Sigmoid colon (tissue), 7 donors: ENCODE measurements at regions of chr14 and their contacts with region 1.

Region 1: DNA sequence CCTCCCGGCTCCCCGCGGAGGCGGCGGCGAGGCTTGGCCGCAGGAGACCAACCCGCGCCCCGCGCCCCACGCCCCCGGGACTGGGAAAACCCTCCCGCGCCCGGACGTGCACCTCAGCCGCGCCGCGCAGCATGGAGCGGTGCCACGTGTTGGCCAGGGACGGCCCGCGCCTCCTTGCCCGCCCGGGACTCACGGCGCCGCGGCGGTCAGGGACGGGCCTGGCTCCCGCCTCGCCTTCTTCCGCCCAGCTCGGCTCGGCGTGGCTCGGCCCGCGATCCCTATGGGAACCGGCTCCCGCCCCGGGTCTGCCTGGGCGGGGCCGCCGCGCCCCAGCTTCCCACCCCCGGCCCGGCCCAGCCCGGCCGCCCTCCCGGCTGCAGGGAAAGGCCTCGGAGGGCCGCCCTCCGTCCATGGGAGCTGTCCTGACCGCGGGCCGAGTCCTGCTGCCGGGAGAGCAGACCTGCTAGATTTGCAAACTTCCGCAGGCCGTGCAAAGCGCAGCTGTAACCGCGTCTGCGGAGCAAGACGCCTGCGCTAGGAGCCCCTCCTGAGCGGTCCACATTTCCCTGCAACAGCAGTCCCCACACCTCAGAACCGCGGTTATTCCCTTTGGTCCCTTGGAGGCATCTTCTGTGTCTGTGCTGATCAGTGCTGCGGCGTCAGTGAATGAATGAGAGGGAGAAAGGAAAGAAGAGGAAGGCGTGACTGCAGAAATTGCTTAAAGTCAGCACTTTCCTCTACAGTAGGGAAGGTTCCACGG is at the start of gene CDKL1:
- DNase-seq: peak; percentile 80
- H3K4me3 ChIP-seq: peak within 1 kb of the TSS; percentile 40 to 83 (median 75)
- H3K27ac ChIP-seq: peak within 1 kb of the TSS; percentile 70 to 87 (median 84)
- H3K4me1 ChIP-seq: peaks cover 0 to 74% (median 49%) of the 10 kb centered on the region in 4 donors
- H3K27me3 ChIP-seq: no peaks in the 10 kb centered on the region
- CTCF ChIP-seq: no peak
- EP300 ChIP-seq: no peak
- POLR2A ChIP-seq: no peak
- total RNA-seq, gene CDKL1: 39.8 to 91.8 (median 58.6) TPM

Region 2: DNA sequence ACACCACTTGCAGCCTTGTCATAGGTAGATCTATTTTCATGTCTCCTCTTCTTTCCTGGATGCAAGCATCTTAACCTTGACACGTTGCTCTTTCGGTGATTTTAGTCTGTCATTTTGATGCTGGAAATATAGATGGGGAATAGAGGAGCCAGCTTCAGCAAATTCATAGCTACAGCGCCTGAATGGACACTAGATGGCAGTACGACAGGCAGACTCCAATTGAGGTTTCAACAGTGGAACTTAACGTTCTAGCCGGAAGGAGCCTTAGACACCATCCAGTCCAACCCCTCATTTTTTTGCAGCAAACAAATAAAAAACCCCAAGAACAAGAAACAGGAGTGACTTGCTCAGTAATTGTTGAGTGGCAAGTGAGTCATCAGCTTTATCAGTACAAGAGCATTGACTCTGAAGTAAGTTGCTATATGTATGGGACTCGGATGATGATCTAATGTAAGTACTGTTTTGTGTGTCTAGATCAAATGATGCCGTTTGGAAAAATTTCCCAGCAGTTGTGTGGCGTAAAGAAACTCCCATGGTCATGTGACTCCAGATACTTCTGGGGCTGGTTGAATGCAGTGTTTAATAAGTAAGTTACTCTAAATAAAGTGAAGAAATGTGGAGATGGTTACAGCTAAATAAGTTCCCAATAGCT is 75.7 kb before region 1 on chr14:
- intact Hi-C with region 1: loop called (anchors 2 kb)
- DNase-seq: peak; percentile 82
- H3K4me3 ChIP-seq: peak overlapping the region in 3 of 4 donors; percentile 19 to 37 (median 21)
- H3K27ac ChIP-seq: peak overlapping the region; percentile 72 to 80 (median 76)
- H3K4me1 ChIP-seq: peaks cover 0 to 38% (median 17%) of the 10 kb centered on the region in 4 donors
- H3K27me3 ChIP-seq: no peaks in the 10 kb centered on the region
- CTCF ChIP-seq: peak; percentile 72 to 90 (median 83)
- EP300 ChIP-seq: no peak
- POLR2A ChIP-seq: no peak

Region 3: GRCh38 chr14:50347521-50347920 is 49.3 kb before region 1 on chr14:
- intact Hi-C with region 1: loop called (anchors 5 kb)
- DNase-seq: no peak
- H3K4me3 ChIP-seq: no peak overlapping the region
- H3K27ac ChIP-seq: peak overlapping the region in 3 of 4 donors; percentile 57 to 81 (median 80)
- H3K4me1 ChIP-seq: peaks cover 0 to 89% (median 82%) of the 10 kb centered on the region in 4 donors
- H3K27me3 ChIP-seq: no peaks in the 10 kb centered on the region
- CTCF ChIP-seq: no peak
- EP300 ChIP-seq: no peak
- POLR2A ChIP-seq: no peak